Breast epithelium (tissue), 4 donors: ENCODE measurements at regions of chr19 and their contacts with region 1.

Region 1: DNA sequence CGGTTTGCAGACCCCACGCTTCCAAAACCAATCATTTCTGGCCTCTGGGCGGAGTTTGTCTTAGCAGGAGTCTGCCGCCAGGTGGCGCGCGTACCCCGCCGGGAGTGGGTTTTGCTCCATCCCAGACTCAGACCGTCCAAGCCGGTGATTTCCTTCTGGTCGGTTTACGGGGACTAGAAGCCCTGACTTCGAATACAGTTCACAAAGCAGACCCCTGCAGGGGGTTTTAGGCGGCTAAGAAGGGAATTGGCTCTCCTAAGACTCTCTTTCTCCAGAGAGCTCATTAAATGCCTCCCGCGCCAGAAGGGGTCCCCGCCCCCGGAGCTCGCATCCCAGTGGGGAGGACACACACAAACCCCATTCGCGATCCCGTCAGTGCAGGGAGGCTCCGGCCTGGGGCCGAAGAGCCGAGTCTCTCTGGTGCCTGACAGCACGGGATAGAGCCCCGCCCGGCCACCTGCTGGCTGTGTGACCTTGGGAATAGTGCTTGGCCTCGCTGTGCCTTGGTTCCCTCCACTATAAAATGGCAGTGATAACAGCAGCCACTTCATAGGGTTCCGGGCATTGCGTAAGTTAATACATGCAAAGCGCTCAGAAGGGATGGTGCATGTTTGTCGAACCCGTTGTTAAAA is 8.6 kb upstream of the NUP62 start:
- DNase-seq: peak; percentile 46 to 72
- H3K4me3 ChIP-seq: peak overlapping the region in 1 of 3 donors; percentile 49
- H3K27ac ChIP-seq: no peak overlapping the region
- H3K4me1 ChIP-seq: no peaks in the 10 kb centered on the region
- H3K27me3 ChIP-seq: no peaks in the 10 kb centered on the region
- CTCF ChIP-seq: peak; percentile 89 to 97 (median 90)
- POLR2A ChIP-seq: no peak

Region 2: DNA sequence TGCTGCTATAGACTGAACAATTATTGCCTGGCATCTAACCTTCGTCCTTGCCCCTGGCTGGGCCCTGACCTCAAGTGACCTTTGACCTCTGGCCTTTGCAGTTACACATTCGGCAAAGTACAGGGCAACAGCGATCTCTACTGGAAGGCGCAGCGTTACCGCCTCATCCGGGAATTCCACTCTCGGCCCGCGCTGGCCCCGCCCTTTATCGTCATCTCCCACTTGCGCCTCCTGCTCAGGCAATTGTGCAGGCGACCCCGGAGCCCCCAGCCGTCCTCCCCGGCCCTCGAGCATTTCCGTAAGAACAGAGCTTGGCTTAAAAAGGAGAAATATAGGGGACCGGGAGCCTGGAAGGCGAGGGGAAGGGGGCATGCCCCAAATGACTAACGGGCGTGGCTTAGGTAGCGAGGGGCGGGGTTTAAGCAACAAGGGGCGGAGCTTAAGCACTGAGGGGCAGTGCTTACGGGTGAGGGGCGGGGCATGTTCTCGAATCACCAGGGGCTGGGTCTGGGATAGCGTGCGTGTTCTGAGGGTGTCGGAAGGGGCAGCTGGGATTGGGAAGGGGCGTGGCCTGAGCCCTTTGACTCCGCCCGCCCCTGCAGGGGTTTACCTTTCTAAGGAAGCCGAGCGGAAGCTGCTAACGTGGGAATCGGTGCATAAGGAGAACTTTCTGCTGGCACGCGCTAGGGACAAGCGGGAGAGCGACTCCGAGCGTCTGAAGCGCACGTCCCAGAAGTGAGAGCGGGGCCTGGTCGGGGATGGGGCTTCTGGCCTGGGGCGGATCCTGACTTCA is 727.6 kb before region 1 on chr19:
- intact Hi-C with region 1: no loop called
- DNase-seq: no peak
- H3K4me3 ChIP-seq: no peak overlapping the region
- H3K27ac ChIP-seq: no peak overlapping the region
- H3K4me1 ChIP-seq: no peaks in the 10 kb centered on the region
- H3K27me3 ChIP-seq: no peaks in the 10 kb centered on the region
- CTCF ChIP-seq: no peak
- POLR2A ChIP-seq: no peak

Region 3: GRCh38 chr19:49968279-49968922 is 30.5 kb after region 1 on chr19:
- intact Hi-C with region 1: loop called (anchors 2 kb)
- DNase-seq: no peak
- H3K4me3 ChIP-seq: no peak overlapping the region
- H3K27ac ChIP-seq: no peak overlapping the region
- H3K4me1 ChIP-seq: no peaks in the 10 kb centered on the region
- H3K27me3 ChIP-seq: peaks cover 0 to 18% of the 10 kb centered on the region in 2 donors
- CTCF ChIP-seq: no peak
- POLR2A ChIP-seq: no peak